Natural killer cell (primary cell): ENCODE measurements at regions of chr7 and their contacts with region 1.

Region 1: GRCh38 chr7:87628780-87629569 is 777 bp downstream of the RUNDC3B start:
- DNase-seq: peak; percentile 25 to 50
- ATAC-seq: peak in 1 of 3 donors; percentile 2
- H3K4me3 ChIP-seq: peak overlapping the region; percentile 67
- H3K4me3 Mint-ChIP-seq: peak overlapping the region; percentile 92
- H3K27ac ChIP-seq: no peak overlapping the region
- H3K27ac Mint-ChIP-seq: peak overlapping the region in 1 of 2 donors; percentile 93
- H3K4me1 ChIP-seq: peaks cover 14% of the 10 kb centered on the region
- H3K4me1 Mint-ChIP-seq: peaks cover 14 to 19% of the 10 kb centered on the region in 2 donors
- H3K27me3 ChIP-seq: no peaks in the 10 kb centered on the region
- H3K27me3 Mint-ChIP-seq: peaks cover 0 to 12% of the 10 kb centered on the region in 2 donors
- CTCF ChIP-seq: no peak

Region 2: DNA sequence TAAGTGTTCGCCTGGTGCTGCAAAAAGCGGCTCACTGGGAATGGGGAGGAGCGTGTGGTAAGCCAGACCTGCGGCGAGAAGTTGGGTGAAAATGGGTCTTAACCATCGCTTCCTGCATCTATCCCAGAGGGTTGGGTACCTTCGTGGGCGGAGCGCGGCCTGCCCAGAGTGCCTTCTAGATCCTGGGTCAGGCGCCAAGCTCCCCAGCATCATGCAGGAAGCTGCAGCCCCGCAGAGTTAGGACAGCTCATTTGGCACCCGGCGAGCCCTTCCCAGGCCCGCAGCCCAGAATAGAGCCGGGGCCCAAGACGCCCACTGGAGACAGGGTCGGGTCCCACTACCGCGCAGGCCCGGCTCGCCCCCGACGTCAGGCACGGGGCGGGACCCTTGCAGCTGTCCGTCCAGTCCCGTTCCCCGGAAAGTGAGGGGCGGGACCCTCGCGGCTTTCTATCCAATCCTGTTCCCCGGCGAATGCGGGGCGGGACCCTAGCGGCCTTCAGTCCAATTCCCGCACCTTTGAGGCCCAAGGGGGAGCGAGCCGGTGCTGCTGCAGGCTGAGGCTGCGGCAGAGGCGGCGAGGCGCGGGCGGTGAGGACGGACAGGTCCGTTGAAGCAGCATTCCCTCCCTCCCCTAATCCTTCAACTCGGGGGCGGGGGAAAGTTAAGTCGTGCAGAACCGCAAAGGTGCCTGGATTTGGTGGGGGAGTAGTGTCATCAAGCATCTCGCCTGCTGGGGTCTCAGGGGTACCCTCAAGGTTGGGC is 283.6 kb before region 1 on chr7 and contains the start of gene CROT:
- intact Hi-C with region 1: loop called (anchors 1 kb)
- DNase-seq: peak; percentile 93 to 95
- ATAC-seq: peak; percentile 96 to 99 (median 98)
- H3K4me3 ChIP-seq: peak within 1 kb of the TSS; percentile 95
- H3K4me3 Mint-ChIP-seq: peak within 1 kb of the TSS; percentile 92
- H3K27ac ChIP-seq: peak within 1 kb of the TSS; percentile 86
- H3K27ac Mint-ChIP-seq: peak within 1 kb of the TSS; percentile 91 to 96
- H3K4me1 ChIP-seq: peaks cover 8% of the 10 kb centered on the region
- H3K4me1 Mint-ChIP-seq: peaks cover 48 to 49% of the 10 kb centered on the region in 2 donors
- H3K27me3 ChIP-seq: no peaks in the 10 kb centered on the region
- H3K27me3 Mint-ChIP-seq: no peaks in the 10 kb centered on the region
- CTCF ChIP-seq: no peak
- total RNA-seq, gene CROT: 17.5 to 19.0 (median 17.9) TPM

Region 3: GRCh38 chr7:87600130-87601124 is 28.5 kb before region 1 on chr7 and contains the start of gene ABCB1:
- intact Hi-C with region 1: loop called (anchors 1 kb)
- DNase-seq: peak; percentile 47 to 75
- ATAC-seq: peak; percentile 74 to 85 (median 82)
- H3K4me3 ChIP-seq: peak within 1 kb of the TSS; percentile 82
- H3K4me3 Mint-ChIP-seq: peak within 1 kb of the TSS; percentile 83
- H3K27ac ChIP-seq: peak within 1 kb of the TSS; percentile 66
- H3K27ac Mint-ChIP-seq: peak within 1 kb of the TSS; percentile 68 to 87
- H3K4me1 ChIP-seq: peaks cover 7% of the 10 kb centered on the region
- H3K4me1 Mint-ChIP-seq: peaks cover 35 to 36% of the 10 kb centered on the region in 2 donors
- H3K27me3 ChIP-seq: no peaks in the 10 kb centered on the region
- H3K27me3 Mint-ChIP-seq: peaks cover 13 to 26% of the 10 kb centered on the region in 2 donors
- CTCF ChIP-seq: no peak
- total RNA-seq, gene ABCB1: 62.8 to 99.5 (median 81.4) TPM

Region 4: DNA sequence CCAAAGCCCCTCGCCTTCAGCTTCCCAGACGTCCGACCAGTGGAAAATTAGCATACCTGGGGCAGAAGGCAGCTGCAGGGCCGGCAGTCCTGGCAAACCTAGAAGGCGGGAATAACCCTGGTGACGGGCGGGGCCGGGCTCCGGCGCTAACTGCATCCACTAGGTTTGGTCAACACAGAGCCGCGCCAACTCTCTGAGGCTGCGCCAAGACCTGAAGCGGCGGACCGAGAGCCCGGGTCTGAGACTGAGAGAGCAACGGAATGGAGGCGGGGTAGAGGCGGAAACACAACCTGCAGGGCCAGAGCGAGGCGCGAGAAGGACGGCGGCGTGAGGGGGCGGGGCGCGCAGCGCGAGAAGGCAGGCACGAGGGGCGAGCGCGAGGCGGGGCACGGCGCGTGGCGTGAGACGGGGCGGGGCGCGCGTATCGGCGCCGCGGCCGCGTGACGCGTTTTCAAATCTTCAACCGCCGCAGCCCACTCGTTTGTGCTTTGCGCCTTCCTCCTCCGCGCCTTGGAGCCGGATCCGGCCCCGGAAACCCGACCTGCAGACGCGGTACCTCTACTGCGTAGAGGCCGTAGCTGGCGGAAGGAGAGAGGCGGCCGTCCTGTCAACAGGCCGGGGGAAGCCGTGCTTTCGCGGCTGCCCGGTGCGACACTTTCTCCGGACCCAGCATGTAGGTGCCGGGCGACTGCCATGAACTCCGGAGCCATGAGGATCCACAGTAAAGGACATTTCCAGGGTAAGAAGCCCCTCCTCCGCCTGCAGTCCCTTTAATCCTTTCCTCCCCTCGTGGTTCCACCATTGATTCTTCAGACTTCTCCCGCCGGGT is 247.3 kb after region 1 on chr7 and contains the starts of genes DBF4 and SLC25A40:
- intact Hi-C with region 1: loop called (anchors 5 kb)
- DNase-seq: peak; percentile 95 to 97
- ATAC-seq: peak; percentile 88 to 97 (median 90)
- H3K4me3 ChIP-seq: peak within 1 kb of the TSS; percentile 94
- H3K4me3 Mint-ChIP-seq: peak within 1 kb of the TSS; percentile 97
- H3K27ac ChIP-seq: peak within 1 kb of the TSS; percentile 88
- H3K27ac Mint-ChIP-seq: peak within 1 kb of the TSS; percentile 94 to 98
- H3K4me1 ChIP-seq: no peaks in the 10 kb centered on the region
- H3K4me1 Mint-ChIP-seq: peaks cover 24 to 42% of the 10 kb centered on the region in 2 donors
- H3K27me3 ChIP-seq: no peaks in the 10 kb centered on the region
- H3K27me3 Mint-ChIP-seq: no peaks in the 10 kb centered on the region
- CTCF ChIP-seq: no peak
- total RNA-seq, gene DBF4: 51.7 to 61.2 (median 54.0) TPM
- total RNA-seq, gene SLC25A40: 17.4 to 26.0 (median 22.6) TPM

Region 5: GRCh38 chr7:87933945-87934698 is 305.1 kb after region 1 on chr7 and contains the start of gene ADAM22:
- intact Hi-C with region 1: loop called (anchors 2 kb)
- DNase-seq: peak; percentile 73 to 90
- ATAC-seq: peak; percentile 94 to 96 (median 95)
- H3K4me3 ChIP-seq: peak within 1 kb of the TSS; percentile 72
- H3K4me3 Mint-ChIP-seq: peak within 1 kb of the TSS; percentile 93
- H3K27ac ChIP-seq: peak within 1 kb of the TSS; percentile 18
- H3K27ac Mint-ChIP-seq: peak within 1 kb of the TSS; percentile 9 to 76
- H3K4me1 ChIP-seq: peaks cover 15% of the 10 kb centered on the region
- H3K4me1 Mint-ChIP-seq: peaks cover 14 to 22% of the 10 kb centered on the region in 2 donors
- H3K27me3 ChIP-seq: no peaks in the 10 kb centered on the region
- H3K27me3 Mint-ChIP-seq: peaks cover 10 to 12% of the 10 kb centered on the region in 2 donors
- CTCF ChIP-seq: no peak
- total RNA-seq, gene ADAM22: 3.0 to 5.4 (median 3.7) TPM